ENCODE measurements at regions of chr11 and their contacts with region 1.

Region 1: DNA sequence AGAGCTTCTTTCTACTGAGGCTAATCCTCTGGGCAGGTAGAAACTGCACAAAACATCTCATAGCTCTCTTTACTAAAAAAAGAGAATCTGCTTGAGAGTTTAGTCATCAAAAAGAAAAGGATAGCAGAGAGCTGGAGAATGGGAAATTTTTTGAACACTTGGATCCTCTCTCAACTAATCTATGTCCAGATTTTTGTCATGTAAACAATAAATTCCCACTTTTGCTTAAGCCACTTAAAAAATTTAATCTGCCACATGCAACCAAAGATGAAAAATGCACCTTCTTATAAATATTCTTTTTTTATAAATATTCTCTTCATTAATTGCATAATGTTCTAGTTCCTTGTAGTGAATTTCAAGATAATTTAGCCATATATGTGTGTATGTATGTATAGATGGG is 10.5 kb downstream of the OR5D16 start:
- DNase-seq: no peak
- ATAC-seq: no peak
- H3K4me3 ChIP-seq: no peak overlapping the region
- H3K27ac ChIP-seq: no peak overlapping the region
- H3K4me1 ChIP-seq: no peaks in the 10 kb centered on the region
- H3K27me3 ChIP-seq: no peaks in the 10 kb centered on the region
- CTCF ChIP-seq: no peak
- EP300 ChIP-seq: no peak
- POLR2A ChIP-seq: no peak
- RAD21 ChIP-seq: no peak

Region 2: DNA sequence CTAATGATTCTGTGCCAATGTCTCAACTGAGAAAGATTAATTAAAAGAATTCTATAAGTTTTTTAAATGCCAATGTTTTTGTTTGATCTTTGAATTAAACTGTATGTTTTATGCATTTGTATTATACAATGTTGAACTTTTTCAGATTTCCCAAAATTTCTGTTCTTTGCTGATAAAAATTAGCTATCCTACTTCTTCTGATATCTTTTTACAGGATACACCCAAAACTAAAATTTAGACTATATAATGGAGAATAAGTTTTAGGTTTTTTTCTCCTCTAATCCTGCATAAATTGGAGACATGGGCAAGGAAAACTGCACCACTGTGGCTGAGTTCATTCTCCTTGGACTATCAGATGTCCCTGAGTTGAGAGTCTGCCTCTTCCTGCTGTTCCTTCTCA is 22.1 kb before region 1 on chr11 and contains the start of gene OR5L2:
- CTCF ChIA-PET with region 1: no interaction called
- POLR2A ChIA-PET with region 1: no interaction called
- RAD21 ChIA-PET with region 1: no interaction called
- SMC1A ChIA-PET with region 1: no interaction called
- in situ Hi-C with region 1: no loop called
- intact Hi-C with region 1: no loop called
- DNase-seq: no peak
- ATAC-seq: no peak
- H3K4me3 ChIP-seq: no peak within 1 kb of the TSS
- H3K27ac ChIP-seq: no peak within 1 kb of the TSS
- H3K4me1 ChIP-seq: no peaks in the 10 kb centered on the region
- H3K27me3 ChIP-seq: no peaks in the 10 kb centered on the region
- CTCF ChIP-seq: no peak
- EP300 ChIP-seq: no peak
- POLR2A ChIP-seq: no peak
- RAD21 ChIP-seq: no peak
- polyA plus RNA-seq, gene OR5L2: not detected

Region 3: GRCh38 chr11:55895216-55895615 is 46.2 kb after region 1 on chr11:
- CTCF ChIA-PET with region 1: no interaction called
- POLR2A ChIA-PET with region 1: no interaction called
- RAD21 ChIA-PET with region 1: no interaction called
- SMC1A ChIA-PET with region 1: no interaction called
- in situ Hi-C with region 1: no loop called
- intact Hi-C with region 1: loop called (anchors 10 kb)
- DNase-seq: no peak
- ATAC-seq: no peak
- H3K4me3 ChIP-seq: no peak overlapping the region
- H3K27ac ChIP-seq: no peak overlapping the region
- H3K4me1 ChIP-seq: no peaks in the 10 kb centered on the region
- H3K27me3 ChIP-seq: no peaks in the 10 kb centered on the region
- CTCF ChIP-seq: no peak
- EP300 ChIP-seq: no peak
- POLR2A ChIP-seq: no peak
- RAD21 ChIP-seq: no peak

Region 4: GRCh38 chr11:55942785-55943392 is 93.9 kb after region 1 on chr11:
- CTCF ChIA-PET with region 1: no interaction called
- POLR2A ChIA-PET with region 1: no interaction called
- RAD21 ChIA-PET with region 1: no interaction called
- SMC1A ChIA-PET with region 1: no interaction called
- in situ Hi-C with region 1: no loop called
- intact Hi-C with region 1: no loop called
- DNase-seq: no peak
- ATAC-seq: peak; percentile 61; the same call in 2 of the 3 replicates
- H3K4me3 ChIP-seq: no peak overlapping the region
- H3K27ac ChIP-seq: no peak overlapping the region
- H3K4me1 ChIP-seq: no peaks in the 10 kb centered on the region
- H3K27me3 ChIP-seq: no peaks in the 10 kb centered on the region
- CTCF ChIP-seq: peak; percentile 37 to 61 (median 38); a peak in 4 of 6 replicates
- EP300 ChIP-seq: no peak
- POLR2A ChIP-seq: no peak
- RAD21 ChIP-seq: peak; percentile 58

Measured in GM12878 (cell line).